ENCODE measurements at regions of chr13 and their contacts with region 1.

Region 1: GRCh38 chr13:95115525-95115924 is 185.7 kb downstream of the ABCC4 start:
- DNase-seq: peak; percentile 84
- H3K4me3 Mint-ChIP-seq: peak overlapping the region; percentile 54
- H3K27ac Mint-ChIP-seq: peak overlapping the region; percentile 68
- H3K4me1 Mint-ChIP-seq: peaks cover 14% of the 10 kb centered on the region
- H3K27me3 Mint-ChIP-seq: no peaks in the 10 kb centered on the region
- CTCF ChIP-seq: no peak

Region 2: DNA sequence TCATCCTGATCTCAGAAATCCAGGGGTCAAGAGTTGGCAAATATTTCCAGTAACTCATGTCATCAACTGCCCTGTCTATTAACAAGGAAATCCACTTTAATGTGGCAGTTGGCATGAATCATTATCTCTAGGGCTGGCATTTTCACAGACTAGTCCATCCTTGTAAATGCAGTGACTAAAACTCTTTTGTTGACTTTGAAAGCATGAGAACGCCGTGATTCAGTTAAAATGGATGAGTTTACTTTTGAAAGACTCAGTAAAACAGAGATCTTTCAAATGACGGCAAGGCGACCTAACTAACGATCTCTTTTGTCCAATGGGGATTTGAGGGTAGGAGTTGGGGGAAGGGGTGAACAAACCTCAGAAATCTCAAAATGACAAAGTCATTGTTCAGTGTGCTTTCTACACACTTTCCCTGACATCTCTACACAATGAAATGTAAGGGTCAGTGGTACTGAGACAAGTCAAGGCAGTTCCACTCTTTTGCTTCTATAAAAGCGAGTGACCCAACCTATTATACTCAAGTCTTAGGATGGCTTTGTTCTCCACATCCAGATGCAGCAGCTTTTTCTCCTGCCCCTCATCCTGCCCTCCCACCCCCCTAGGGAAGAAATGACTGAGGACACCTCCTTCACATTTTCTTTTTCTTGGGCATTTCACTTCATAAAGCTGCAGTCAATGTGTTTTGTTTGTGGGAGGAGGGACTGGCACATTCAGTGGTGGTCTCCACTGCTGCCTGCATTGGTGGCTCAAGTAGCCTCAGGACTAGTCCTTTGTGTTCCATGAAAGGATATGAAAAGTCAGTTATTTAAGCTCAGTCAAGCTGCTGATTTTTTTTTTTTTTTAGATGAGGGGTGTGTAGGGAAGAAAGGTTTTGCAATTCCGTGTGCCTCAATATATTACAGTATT is 14.7 kb before region 1 on chr13:
- CTCF ChIA-PET with region 1: no interaction called
- POLR2A ChIA-PET with region 1: interaction called, 11 read pairs
- intact Hi-C with region 1: no loop called
- DNase-seq: peak; percentile 78
- H3K4me3 Mint-ChIP-seq: peak overlapping the region; percentile 26
- H3K27ac Mint-ChIP-seq: peak overlapping the region; percentile 81
- H3K4me1 Mint-ChIP-seq: peaks cover 23% of the 10 kb centered on the region
- H3K27me3 Mint-ChIP-seq: no peaks in the 10 kb centered on the region
- CTCF ChIP-seq: no peak